SK-N-SH (cell line): ENCODE measurements at regions of chr12 and their contacts with region 1.

Region 1: DNA sequence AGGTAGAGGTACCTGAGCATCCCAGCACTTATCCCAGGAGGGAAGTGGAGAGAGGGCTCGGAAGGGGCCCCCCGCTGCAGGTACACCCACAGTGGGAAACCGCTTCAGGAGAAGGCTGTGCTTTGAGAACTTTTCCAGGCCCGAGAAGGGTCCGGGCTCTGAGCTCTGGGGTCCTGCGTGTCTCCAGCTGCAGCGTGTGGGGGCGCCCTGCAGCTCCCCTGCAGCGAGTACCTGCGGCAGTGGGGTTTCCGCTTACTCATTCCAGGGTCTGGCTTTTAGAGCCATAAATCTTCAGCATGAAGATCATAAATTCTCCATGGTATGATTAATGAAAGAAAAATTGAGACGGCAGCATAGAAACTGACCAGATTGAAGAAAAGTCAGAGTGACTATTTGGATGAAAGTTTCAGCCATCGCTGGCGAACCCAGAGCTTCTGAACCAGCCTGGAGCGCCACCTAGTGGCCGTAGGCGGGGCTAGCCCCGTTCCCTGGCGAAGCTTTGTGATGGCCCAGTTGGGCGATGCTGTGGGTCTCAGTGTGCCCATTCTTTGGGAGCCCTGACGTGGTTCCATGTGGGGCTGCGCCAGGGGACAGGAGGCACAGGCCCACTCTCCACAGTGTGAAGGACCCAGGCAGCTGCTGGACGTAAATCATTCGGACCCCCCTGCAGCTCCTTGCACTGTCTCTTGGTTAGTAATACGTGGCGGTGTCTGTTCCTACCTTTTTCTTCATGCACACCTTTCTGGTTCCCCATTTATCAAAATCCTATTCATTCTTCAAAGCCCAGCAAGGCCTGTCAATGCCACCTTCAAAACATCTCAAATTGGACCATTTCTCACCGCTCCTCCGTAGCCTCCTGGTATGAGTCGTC is 198.2 kb downstream of the TSPAN9 start:
- DNase-seq: peak; percentile 91
- H3K4me3 ChIP-seq: no peak overlapping the region; a peak in 1 of 4 replicates
- H3K27ac ChIP-seq: no peak overlapping the region
- H3K4me1 ChIP-seq: peaks cover 0 to 2% of the 10 kb centered on the region in 2 experiments; a peak in 1 of 4 replicates
- H3K27me3 ChIP-seq: no peaks in the 10 kb centered on the region
- CTCF ChIP-seq: peak; percentile 97
- EP300 ChIP-seq: no peak
- RAD21 ChIP-seq: peak; percentile 98

Region 2: GRCh38 chr12:2550561-2551411 is 724.6 kb before region 1 on chr12:
- CTCF ChIA-PET with region 1: no interaction called
- POLR2A ChIA-PET with region 1: no interaction called
- DNase-seq: no peak
- H3K4me3 ChIP-seq: no peak overlapping the region
- H3K27ac ChIP-seq: no peak overlapping the region
- H3K4me1 ChIP-seq: no peaks in the 10 kb centered on the region; a peak in 1 of 4 replicates
- H3K27me3 ChIP-seq: no peaks in the 10 kb centered on the region
- CTCF ChIP-seq: no peak
- EP300 ChIP-seq: no peak
- RAD21 ChIP-seq: no peak

Region 3: GRCh38 chr12:3060778-3061458 is 214.5 kb before region 1 on chr12:
- CTCF ChIA-PET with region 1: interaction called, 165 read pairs
- POLR2A ChIA-PET with region 1: no interaction called
- DNase-seq: no peak
- H3K4me3 ChIP-seq: no peak overlapping the region
- H3K27ac ChIP-seq: no peak overlapping the region
- H3K4me1 ChIP-seq: no peaks in the 10 kb centered on the region
- H3K27me3 ChIP-seq: no peaks in the 10 kb centered on the region
- CTCF ChIP-seq: no peak
- EP300 ChIP-seq: no peak
- RAD21 ChIP-seq: no peak

Region 4: DNA sequence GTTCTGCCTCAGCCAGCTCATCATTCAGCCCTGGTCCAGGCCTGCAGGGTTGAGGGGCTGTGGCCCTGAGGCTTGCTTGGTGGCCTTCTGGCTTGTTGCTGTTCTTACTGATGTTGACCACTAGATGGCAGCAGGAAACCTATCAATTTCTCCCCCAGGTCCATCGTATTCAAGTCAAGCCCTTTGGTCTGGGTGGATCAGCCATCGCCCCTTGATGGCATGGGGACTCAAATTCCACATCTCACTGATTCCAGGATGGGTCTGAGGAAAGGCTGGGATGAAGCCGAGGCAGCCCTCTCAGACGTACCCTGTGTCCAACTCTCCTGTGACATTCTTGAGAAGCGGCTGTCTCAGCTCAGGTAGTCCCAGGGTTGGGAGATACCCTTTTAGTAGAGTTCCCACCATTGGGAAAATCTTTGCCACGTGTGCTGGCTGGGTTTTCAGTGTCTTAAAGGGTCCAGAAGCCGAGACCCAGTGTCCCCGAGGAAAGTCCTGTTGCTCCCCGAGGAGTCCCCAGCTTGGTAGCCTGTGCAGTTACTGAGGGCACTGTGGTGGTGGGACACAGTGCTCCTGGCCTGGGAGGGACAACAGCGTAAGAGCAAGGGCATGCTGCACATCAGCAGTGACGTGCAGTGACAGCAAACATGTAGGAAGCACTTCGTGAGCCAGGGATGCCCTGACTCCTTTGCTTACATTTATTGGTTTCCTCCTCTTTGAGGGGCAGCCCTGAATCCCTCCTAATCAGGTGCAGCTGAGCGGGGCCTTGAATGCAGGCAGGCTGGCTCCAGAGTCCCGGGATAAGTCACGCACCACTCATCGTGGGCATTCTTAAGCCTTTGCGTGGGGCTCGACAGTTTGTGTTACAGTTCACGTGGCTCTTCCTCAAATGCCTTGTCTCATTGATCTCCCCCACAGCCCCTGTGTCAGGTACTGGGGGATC is 139.6 kb before region 1 on chr12:
- CTCF ChIA-PET with region 1: interaction called, 368 read pairs
- POLR2A ChIA-PET with region 1: interaction called, 3 read pairs
- DNase-seq: peak; percentile 90
- H3K4me3 ChIP-seq: no peak overlapping the region; a peak in 1 of 4 replicates
- H3K27ac ChIP-seq: no peak overlapping the region
- H3K4me1 ChIP-seq: peaks cover 13 to 22% of the 10 kb centered on the region in 2 experiments; a peak in 3 of 4 replicates
- H3K27me3 ChIP-seq: no peaks in the 10 kb centered on the region
- CTCF ChIP-seq: peak; percentile 78
- EP300 ChIP-seq: no peak
- RAD21 ChIP-seq: peak; percentile 96

Region 5: GRCh38 chr12:3158851-3159465 is 116.4 kb before region 1 on chr12:
- CTCF ChIA-PET with region 1: interaction called, 10 read pairs
- POLR2A ChIA-PET with region 1: no interaction called
- DNase-seq: no peak
- H3K4me3 ChIP-seq: no peak overlapping the region
- H3K27ac ChIP-seq: peak overlapping the region in 1 of 2 experiments; percentile 7; a peak in 1 of 4 replicates
- H3K4me1 ChIP-seq: peaks cover 0 to 16% of the 10 kb centered on the region in 2 experiments; a peak in 2 of 4 replicates
- H3K27me3 ChIP-seq: no peaks in the 10 kb centered on the region
- CTCF ChIP-seq: no peak
- EP300 ChIP-seq: no peak
- RAD21 ChIP-seq: no peak

Region 6: DNA sequence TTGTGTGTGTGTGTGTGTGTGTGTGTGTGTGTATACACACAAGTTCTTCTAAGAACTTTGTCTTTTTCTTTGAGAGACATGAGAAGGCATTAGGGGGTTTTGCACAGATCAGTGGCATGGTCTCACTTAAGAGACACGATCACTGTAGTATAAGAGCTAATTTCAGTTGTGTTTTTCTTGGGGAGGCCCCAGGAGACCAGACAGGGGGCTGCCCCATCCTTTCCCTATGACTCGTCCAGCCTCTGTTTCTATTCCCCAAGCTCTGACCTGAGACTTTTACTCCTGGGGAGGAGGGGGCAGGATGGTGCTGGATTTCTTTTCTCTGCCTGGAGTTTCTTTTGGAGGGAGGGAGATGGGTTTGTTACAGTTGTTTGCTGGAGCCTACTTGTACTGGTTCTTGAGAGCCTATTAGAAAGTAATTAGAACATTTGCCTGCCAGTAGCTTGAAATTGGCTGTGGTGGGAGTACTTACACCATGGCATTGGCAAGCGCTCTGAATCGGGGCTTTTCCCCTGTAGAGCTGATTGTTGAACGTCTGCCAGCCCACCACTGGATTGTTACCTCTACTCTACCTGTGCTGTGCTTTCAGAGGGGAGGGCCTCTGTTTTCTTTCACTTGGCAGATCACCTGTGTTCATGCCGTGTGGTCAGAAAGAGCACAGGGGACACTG is 88.7 kb before region 1 on chr12:
- CTCF ChIA-PET with region 1: interaction called, 22 read pairs
- POLR2A ChIA-PET with region 1: no interaction called
- DNase-seq: no peak
- H3K4me3 ChIP-seq: no peak overlapping the region
- H3K27ac ChIP-seq: no peak overlapping the region
- H3K4me1 ChIP-seq: peaks cover 15 to 21% of the 10 kb centered on the region in 2 experiments; a peak in 3 of 4 replicates
- H3K27me3 ChIP-seq: no peaks in the 10 kb centered on the region
- CTCF ChIP-seq: no peak
- EP300 ChIP-seq: no peak
- RAD21 ChIP-seq: no peak

Region 7: DNA sequence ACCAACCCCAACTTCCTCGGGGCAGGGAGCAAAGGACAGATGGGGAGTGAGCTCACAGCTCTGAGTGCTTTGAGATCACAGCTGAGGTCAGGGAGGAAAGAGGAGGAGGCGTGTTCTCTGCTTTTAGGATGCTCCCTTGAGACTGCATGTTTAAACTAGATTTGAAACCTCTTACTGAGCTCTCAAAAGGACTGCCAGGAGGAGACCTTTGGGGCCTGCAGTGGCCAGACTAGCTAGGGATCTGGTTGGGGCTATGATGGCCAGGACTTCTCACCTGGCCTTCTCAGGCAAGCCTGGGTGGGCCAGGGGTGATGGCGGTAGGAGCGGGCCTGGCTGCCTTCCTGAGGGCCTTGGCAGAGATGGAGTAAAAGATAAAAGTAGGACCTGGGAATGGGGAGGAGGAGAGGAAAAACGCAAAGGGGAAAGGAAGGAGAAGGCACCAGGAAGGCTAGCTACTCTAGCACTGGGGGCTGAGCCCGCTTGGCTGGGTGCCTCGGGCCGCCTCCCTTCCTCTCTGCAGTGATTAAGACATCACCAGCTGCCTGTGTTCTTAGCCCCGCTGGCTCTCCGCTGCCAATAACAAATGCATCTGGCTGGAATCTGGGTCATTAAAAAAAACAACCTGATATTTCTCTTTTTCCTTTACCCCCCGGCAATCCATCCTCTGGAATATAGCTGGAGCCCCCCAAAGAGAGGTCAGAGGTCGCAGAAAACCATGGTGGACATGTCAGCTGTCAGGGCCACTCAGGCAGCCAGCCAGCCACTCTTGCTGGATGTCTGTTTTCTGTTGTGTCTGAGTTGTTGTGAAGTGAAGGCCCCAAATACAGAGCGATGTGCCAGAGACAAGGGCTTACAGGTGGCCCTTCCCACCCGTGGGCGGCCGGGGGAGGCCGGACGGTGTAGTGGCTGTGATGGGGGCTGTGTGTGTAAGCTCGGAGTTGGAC is 56.9 kb before region 1 on chr12:
- CTCF ChIA-PET with region 1: interaction called, 22 read pairs
- POLR2A ChIA-PET with region 1: no interaction called
- DNase-seq: peak; percentile 87
- H3K4me3 ChIP-seq: no peak overlapping the region
- H3K27ac ChIP-seq: peak overlapping the region; percentile 75 to 86
- H3K4me1 ChIP-seq: peaks cover 31 to 62% of the 10 kb centered on the region in 2 experiments
- H3K27me3 ChIP-seq: no peaks in the 10 kb centered on the region
- CTCF ChIP-seq: no peak
- EP300 ChIP-seq: peak in 1 of 2 experiments; percentile 52; a peak in 2 of 4 replicates
- RAD21 ChIP-seq: no peak

Region 8: DNA sequence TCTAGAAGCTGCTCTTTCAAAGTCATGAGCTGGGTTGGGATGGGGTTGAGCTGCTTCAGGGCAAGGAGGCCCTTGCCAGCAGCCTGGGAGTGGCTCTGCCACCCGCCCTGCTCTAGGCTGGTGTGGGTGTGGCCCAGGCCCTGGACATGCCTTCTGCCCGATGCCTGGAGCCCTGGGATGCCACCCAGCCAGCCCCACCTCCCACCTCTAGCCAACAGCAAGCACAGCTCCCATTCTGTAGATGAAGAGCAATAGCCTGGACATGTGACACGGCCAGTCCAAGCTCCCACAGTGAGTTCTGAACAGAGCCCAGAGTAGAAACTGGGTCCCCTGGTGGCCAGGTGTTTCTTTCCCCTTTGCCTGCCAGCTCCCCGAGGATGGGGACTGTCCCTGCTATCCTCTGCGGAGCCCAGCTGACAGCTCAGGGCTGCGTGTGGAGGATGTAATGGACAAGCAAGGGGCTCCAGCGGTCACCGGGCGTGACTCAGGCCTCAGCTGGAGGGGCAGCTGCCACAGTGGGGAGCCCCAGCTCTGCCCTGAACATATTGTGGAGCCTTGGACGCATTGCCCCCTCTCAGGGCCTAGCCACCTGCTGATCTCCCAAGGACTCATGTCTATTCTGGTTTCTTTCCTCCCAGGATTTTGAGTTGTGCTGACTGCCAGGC is 33.1 kb before region 1 on chr12:
- CTCF ChIA-PET with region 1: interaction called, 12 read pairs
- POLR2A ChIA-PET with region 1: no interaction called
- DNase-seq: no peak
- H3K4me3 ChIP-seq: no peak overlapping the region
- H3K27ac ChIP-seq: no peak overlapping the region
- H3K4me1 ChIP-seq: peaks cover 0 to 1% of the 10 kb centered on the region in 2 experiments; a peak in 1 of 4 replicates
- H3K27me3 ChIP-seq: no peaks in the 10 kb centered on the region
- CTCF ChIP-seq: no peak
- EP300 ChIP-seq: no peak
- RAD21 ChIP-seq: no peak